PC-3 (cell line): ENCODE measurements at regions of chr6 and their contacts with region 1.

Region 1: DNA sequence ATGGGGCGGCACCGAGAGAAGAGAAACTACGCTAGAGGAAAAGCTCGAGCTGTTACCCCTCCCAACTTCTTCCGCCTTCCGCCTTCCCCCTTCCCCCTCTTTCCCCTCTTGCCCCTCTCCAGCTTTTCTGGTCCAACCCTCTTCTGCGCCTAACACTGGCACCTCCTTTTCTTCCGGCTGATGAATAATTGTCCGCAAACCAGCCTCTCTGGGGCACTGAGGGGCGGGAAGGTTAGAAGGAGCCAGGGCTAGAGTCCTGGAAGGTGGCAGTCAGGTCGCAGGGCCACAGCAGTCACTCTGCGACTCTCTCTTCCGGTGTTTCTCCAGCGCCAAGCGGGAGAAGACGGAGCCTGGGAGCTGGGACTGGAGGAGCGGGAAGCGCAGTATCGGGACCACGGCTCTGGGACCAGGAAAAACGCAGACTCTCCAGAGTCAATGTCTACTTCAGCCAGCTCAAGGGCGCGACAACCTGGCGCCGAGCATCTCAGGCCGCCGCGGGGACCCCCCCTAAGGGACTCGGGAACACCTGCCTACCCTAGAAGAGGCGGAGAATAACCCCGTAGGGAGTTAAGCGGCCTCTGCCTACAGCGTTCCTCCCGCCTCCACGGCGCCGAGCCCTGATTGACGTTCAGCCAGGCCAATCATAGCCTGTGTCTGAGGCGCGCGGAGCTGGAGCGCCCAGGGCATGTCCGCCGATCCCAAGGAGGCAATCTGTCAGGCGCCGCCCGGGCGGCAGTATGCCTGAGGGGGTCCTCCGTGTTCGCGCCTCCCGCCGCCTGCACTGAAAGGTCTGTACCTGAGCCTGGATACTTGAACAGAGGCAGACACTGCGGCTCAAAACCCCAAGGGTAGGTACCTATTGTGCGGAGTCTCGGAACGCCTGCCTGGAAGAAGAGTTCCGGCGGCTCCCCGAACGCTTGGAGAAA is 40.4 kb downstream of the PSMB9 start:
- DNase-seq: peak; percentile 97
- ATAC-seq: peak; percentile 99
- H3K4me3 ChIP-seq: peak overlapping the region; percentile 85
- H3K27ac ChIP-seq: peak overlapping the region; percentile 3; the same call in 1 of the 2 replicates
- H3K4me1 ChIP-seq: peaks cover 10% of the 10 kb centered on the region
- H3K27me3 ChIP-seq: no peaks in the 10 kb centered on the region
- CTCF ChIP-seq: no peak

Region 2: DNA sequence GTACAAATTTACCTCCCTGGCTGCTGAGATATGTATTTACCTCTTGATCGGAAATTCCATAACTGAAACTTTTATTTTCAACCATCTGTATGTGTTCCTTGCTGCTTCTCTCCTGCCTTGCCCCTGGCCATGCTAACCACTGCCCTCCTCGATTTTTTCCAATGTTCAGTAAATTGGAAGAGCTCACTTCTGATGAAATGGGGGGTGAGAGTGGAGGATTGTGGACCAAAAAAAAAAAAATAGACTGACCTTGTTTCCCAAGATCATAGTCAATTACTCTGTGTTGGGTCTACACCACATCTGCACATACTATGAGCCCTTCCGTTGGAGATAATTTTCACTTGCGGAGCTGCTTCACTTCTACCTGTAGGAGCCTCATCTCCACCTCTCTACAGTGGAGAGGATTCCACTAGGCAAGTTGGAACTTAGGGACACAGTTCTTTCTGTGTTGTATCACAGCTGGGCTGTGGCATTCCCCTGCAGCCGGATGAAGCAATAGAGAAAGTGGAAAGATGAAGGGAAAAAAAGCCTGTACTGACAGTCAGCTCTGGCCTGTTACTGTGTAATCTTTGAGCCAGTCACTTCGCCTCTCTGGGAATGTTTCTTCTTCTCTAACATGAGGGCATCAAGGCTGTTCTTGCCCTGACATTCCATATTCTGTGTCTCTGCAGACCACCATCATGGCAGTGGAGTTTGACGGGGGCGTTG is 38.7 kb before region 1 on chr6:
- CTCF ChIA-PET with region 1: no interaction called
- POLR2A ChIA-PET with region 1: no interaction called
- intact Hi-C with region 1: no loop called
- DNase-seq: no peak
- ATAC-seq: no peak
- H3K4me3 ChIP-seq: no peak overlapping the region
- H3K27ac ChIP-seq: no peak overlapping the region
- H3K4me1 ChIP-seq: peaks cover 7% of the 10 kb centered on the region
- H3K27me3 ChIP-seq: no peaks in the 10 kb centered on the region
- CTCF ChIP-seq: no peak

Region 3: DNA sequence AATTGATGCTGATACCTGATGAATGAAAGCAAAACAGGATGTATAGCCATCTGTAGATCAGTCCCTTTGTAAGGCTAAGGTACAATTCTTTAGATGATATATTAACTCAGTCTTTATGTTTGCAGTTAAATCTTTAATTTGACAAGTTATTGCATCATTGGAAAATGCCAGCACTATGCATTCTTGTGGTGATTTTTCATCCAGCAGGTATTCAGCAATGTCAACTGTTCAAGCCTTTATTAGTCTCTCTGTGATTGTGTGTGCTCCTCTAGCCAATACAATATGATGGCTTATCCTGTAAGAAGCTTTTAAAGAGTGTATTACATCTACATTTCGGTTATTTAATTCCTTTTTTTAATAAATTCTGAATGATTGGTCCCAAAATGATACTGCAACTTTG is 12.2 kb after region 1 on chr6:
- CTCF ChIA-PET with region 1: no interaction called
- POLR2A ChIA-PET with region 1: no interaction called
- intact Hi-C with region 1: loop called (anchors 1 kb)
- DNase-seq: peak; percentile 63
- ATAC-seq: peak; percentile 69
- H3K4me3 ChIP-seq: no peak overlapping the region
- H3K27ac ChIP-seq: no peak overlapping the region
- H3K4me1 ChIP-seq: peaks cover 8% of the 10 kb centered on the region; the same call in 1 of the 2 replicates
- H3K27me3 ChIP-seq: peaks cover 17% of the 10 kb centered on the region; the same call in 1 of the 2 replicates
- CTCF ChIP-seq: no peak

Region 4: GRCh38 chr6:32984605-32985389 is 90.5 kb after region 1 on chr6:
- CTCF ChIA-PET with region 1: interaction called, 10 read pairs
- POLR2A ChIA-PET with region 1: no interaction called
- intact Hi-C with region 1: no loop called
- DNase-seq: peak; percentile 95
- ATAC-seq: peak; percentile 95
- H3K4me3 ChIP-seq: no peak overlapping the region
- H3K27ac ChIP-seq: no peak overlapping the region
- H3K4me1 ChIP-seq: peaks cover 8% of the 10 kb centered on the region; the same call in 1 of the 2 replicates
- H3K27me3 ChIP-seq: no peaks in the 10 kb centered on the region
- CTCF ChIP-seq: peak; percentile 94

Region 5: DNA sequence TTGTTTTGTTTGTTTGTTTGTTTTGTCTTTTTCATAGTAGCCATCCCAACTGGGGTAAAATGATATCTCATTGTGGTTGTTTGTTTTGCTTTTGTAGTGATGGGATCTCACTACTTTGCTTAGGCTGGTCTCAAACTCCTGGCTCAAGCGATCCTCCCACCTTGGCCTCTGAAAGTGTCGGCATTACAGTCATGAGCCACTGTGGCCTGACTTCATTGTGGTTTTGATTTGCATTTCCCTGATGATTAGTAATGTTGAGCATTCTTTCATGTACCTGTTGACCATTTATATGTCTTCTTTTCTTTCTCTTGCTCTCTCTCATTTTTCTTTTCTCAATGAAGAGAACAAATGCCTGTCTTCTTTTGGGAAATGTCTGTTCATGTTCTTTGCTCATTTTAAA is 145.8 kb after region 1 on chr6:
- CTCF ChIA-PET with region 1: no interaction called
- POLR2A ChIA-PET with region 1: no interaction called
- intact Hi-C with region 1: no loop called
- DNase-seq: no peak
- ATAC-seq: no peak
- H3K4me3 ChIP-seq: no peak overlapping the region
- H3K27ac ChIP-seq: no peak overlapping the region
- H3K4me1 ChIP-seq: no peaks in the 10 kb centered on the region
- H3K27me3 ChIP-seq: peaks cover 36% of the 10 kb centered on the region
- CTCF ChIP-seq: no peak